ENCODE measurements at regions of chr10 and their contacts with region 1.

Region 1: GRCh38 chr10:97407211-97407951 is 6.2 kb upstream of the RRP12 start:
- DNase-seq: peak; percentile 79
- H3K4me3 Mint-ChIP-seq: no peak overlapping the region
- H3K27ac Mint-ChIP-seq: peak overlapping the region; percentile 70
- H3K4me1 Mint-ChIP-seq: peaks cover 13% of the 10 kb centered on the region
- H3K27me3 Mint-ChIP-seq: no peaks in the 10 kb centered on the region

Region 2: DNA sequence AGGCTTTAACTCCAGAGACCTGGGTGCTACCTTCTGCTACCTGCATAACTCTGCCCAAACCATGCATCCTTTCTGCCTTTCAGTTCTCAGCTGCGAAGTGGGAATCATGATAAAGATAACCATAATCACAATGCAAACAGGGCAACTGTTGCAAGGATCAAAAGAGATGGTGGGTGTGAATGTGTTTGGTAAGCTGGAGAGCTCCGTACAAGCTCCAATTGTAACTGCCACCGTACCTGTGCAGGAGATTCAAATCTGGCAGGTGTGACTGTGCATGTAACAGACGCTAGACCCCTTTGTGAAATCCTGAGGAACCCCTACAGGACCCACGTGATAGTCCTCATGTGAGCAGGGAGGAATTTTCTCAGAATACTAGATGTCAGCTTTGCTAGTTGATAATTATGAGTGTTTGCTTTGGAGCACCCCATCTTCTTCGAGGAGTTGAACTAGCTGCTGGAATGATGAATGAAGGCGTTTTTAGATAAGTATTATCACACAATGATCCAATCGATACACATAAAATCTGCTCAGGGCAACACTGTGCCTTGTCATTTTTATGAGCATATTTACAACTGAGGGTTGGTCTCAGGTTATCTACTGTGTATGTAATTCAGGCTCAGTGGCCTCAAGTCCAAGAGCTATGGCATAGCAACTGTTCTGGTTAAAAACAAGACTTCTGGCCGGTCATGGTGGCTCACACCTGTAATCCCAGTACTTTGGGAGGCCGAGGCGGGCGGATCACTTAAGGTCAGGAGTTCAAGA is 57.4 kb before region 1 on chr10:
- CTCF ChIA-PET with region 1: no interaction called
- POLR2A ChIA-PET with region 1: no interaction called
- intact Hi-C with region 1: no loop called
- DNase-seq: no peak
- H3K4me3 Mint-ChIP-seq: no peak overlapping the region
- H3K27ac Mint-ChIP-seq: no peak overlapping the region
- H3K4me1 Mint-ChIP-seq: no peaks in the 10 kb centered on the region
- H3K27me3 Mint-ChIP-seq: no peaks in the 10 kb centered on the region

Region 3: DNA sequence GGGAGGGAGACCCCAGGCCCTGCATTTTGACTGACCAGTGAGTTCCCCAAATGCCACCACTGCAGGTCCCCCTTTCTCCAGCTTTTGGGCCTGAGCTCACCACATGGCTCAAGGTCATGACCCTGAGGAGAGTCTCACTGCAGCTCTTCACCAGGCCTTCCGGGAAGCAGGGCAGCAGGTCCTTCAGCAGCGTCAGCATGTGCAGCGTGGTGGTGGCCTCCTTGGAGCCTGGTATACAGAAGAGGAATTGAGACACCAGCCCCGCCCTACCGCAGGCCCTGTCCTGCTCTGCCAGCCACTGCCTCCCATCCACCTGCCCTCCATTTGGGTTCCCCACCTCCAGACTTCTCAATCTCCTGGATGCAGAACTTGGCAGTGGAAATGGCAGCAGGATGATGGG is 19.2 kb before region 1 on chr10:
- CTCF ChIA-PET with region 1: no interaction called
- POLR2A ChIA-PET with region 1: no interaction called
- intact Hi-C with region 1: no loop called
- DNase-seq: no peak
- H3K4me3 Mint-ChIP-seq: no peak overlapping the region
- H3K27ac Mint-ChIP-seq: no peak overlapping the region
- H3K4me1 Mint-ChIP-seq: peaks cover 2% of the 10 kb centered on the region
- H3K27me3 Mint-ChIP-seq: no peaks in the 10 kb centered on the region

Region 4: GRCh38 chr10:97434055-97434454 is 26.7 kb after region 1 on chr10:
- CTCF ChIA-PET with region 1: interaction called, 23 read pairs
- POLR2A ChIA-PET with region 1: interaction called, 326 read pairs
- intact Hi-C with region 1: no loop called
- DNase-seq: no peak
- H3K4me3 Mint-ChIP-seq: no peak overlapping the region
- H3K27ac Mint-ChIP-seq: peak overlapping the region; percentile 86
- H3K4me1 Mint-ChIP-seq: peaks cover 23% of the 10 kb centered on the region
- H3K27me3 Mint-ChIP-seq: no peaks in the 10 kb centered on the region

Region 5: DNA sequence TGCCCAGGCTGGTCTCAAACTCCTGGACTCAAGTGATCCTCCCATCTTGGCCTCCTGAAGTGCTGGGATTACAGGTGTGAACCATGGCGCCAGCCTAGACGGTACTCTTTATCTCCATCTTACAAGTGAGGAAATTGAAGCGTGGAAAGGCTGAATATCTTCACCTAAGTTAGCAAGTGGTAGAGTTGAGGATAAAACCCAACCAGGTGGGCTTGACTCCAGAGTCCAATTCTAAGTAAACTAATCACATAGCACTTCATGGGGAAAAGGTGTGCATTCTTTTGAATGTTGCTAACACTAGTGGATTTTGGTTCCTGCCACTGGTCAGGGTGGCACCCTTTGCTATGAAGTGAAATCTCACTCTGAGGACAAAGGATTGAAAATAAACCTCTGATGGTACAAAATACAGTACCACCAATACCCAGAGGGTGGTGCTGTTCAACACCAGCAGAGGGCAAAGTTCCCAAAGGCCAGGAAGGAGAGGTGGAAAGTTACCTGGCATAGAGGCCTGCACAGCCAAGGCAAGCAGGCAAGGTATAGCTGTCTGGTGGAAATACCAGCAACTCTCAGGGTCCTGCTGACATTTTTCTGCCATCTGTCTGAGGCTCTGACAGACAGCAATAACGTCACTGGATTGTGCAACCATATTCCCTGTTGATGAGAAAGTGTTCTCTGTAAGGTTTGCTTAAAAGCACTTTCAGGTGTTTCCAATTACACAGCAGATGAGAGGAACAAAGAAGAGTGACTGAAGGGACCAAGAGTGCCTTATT is 56.2 kb after region 1 on chr10:
- CTCF ChIA-PET with region 1: interaction called, 6 read pairs
- POLR2A ChIA-PET with region 1: no interaction called
- intact Hi-C with region 1: loop called (anchors 1 kb)
- DNase-seq: peak; percentile 36
- H3K4me3 Mint-ChIP-seq: no peak overlapping the region
- H3K27ac Mint-ChIP-seq: peak overlapping the region; percentile 3
- H3K4me1 Mint-ChIP-seq: no peaks in the 10 kb centered on the region
- H3K27me3 Mint-ChIP-seq: no peaks in the 10 kb centered on the region

Region 6: DNA sequence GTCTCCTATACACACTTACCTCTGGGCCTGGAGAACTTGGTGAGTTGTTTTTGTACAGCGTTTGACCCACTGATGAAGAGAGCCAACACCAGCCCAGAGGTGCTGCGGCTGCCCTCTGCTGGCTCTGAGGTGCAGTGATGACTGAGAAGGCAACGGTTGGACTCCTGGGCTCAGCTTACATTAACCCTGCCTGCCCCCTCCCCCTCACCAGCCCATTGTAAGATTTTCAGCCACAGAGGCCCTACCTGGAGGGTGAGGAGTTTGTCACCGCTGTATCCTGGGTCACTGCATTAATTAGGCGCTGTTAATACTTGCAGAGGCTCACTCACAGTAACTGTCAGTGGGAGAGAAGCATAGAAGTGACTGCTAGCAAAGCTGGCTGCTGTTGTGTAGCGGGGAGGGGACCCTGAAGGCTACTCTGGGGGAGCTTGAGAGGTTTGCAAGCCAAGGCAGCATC is 146.2 kb after region 1 on chr10:
- CTCF ChIA-PET with region 1: interaction called, 19 read pairs
- POLR2A ChIA-PET with region 1: no interaction called
- intact Hi-C with region 1: loop called (anchors 1 kb)
- DNase-seq: peak; percentile 75
- H3K4me3 Mint-ChIP-seq: no peak overlapping the region
- H3K27ac Mint-ChIP-seq: no peak overlapping the region
- H3K4me1 Mint-ChIP-seq: no peaks in the 10 kb centered on the region
- H3K27me3 Mint-ChIP-seq: no peaks in the 10 kb centered on the region

Measured in activated CD4-positive, alpha-beta memory T cell treated with anti-CD3 and anti-CD28 coated beads for 36 hours (primary cell).